ENCODE measurements at regions of chr1 and their contacts with region 1.

Region 1: GRCh38 chr1:219805193-219805592 is 123.2 kb downstream of the SLC30A10 start:
- DNase-seq: no peak
- H3K4me3 ChIP-seq: no peak overlapping the region
- H3K27ac ChIP-seq: no peak overlapping the region
- H3K27me3 ChIP-seq: peaks cover 0 to under 1% (median 0%) of the 10 kb centered on the region in 45 donors
- CTCF ChIP-seq: peak in 1 of 56 donors; percentile 7

Region 2: GRCh38 chr1:218339267-218339831 is 1465.8 kb before region 1 on chr1:
- intact Hi-C with region 1: loop called in 1 of 2 experiments (anchors 2 kb)
- DNase-seq: no peak
- H3K4me3 ChIP-seq: peak overlapping the region in 3 of 59 donors; percentile 7 to 9 (median 7)
- H3K27ac ChIP-seq: no peak overlapping the region
- H3K27me3 ChIP-seq: no peaks in the 10 kb centered on the region
- CTCF ChIP-seq: peak; percentile 60 to 93 (median 82)

Region 3: GRCh38 chr1:219667935-219668334 is 137.3 kb before region 1 on chr1:
- intact Hi-C with region 1: loop called (anchors 2 to 5 kb)
- DNase-seq: no peak
- H3K4me3 ChIP-seq: no peak overlapping the region
- H3K27ac ChIP-seq: no peak overlapping the region
- H3K27me3 ChIP-seq: no peaks in the 10 kb centered on the region
- CTCF ChIP-seq: no peak

Measured in dorsolateral prefrontal cortex (tissue), 120 donors.